ENCODE measurements at regions of chr3 and their contacts with region 1.

Region 1: DNA sequence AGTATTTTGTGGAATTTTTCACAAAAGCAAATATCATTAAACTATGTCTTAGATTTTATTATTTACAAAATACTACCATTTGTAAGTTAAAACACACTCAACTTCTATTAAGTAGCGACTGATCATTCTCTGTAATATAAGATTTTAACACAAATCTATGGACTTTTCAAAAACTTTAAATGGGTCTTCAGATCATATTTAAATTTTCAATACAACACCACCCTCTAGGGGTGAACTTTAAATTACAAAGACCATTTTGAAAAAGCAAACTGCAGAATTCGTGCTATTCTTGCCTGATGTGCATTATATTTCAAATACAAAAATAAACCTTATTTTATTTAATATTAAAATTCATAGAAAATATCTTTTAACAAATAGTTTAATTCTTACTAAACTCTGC is 8.2 kb upstream of the VGLL4 start:
- DNase-seq: peak; percentile 29
- ATAC-seq: no peak
- H3K4me3 ChIP-seq: no peak overlapping the region
- H3K27ac ChIP-seq: no peak overlapping the region
- H3K4me1 ChIP-seq: peaks cover 14% of the 10 kb centered on the region
- H3K27me3 ChIP-seq: no peaks in the 10 kb centered on the region
- CTCF ChIP-seq: peak; percentile 41; the same call in 1 of the 2 replicates
- EP300 ChIP-seq: no peak
- POLR2A ChIP-seq: no peak
- RAD21 ChIP-seq: no peak

Region 2: DNA sequence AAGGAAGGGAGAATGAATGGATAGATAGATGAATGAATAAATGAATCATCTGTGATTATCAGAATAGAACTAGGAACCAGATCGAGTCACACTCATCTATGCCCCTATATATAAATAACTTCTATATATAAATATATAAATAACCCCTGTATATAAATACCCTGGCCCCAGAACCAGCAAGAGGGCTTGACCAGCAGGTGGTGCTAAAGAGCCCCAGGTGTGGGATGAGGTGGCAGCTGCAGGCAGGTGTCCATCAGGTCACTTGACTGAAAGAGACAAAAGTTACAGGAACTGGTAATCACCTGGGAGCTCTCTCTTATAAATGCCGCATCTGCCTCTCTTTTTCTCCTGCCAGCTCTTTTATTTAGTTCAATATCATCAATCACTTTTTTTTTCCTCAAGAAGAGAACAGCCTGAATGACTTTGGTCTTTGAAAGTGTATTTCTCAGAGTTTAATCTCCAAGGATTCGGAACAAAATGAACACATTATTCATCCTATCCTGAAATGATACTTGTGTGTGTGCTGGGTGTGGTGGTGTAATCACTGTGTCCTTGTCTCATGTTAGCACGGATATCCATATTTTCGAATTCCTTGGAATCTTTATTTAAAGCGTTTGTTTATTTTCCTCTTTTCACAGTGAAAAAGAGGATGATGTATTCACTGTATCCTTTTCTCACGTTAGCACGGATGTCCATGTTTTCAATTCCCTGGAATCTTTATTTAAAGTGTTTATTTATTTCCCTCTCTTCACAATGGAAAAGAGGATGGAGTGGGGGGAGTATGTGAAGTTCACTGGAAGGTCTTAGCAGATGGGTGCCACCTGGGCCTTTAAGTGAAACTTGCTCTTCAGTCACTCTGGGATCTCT is 415.1 kb before region 1 on chr3:
- CTCF ChIA-PET with region 1: no interaction called
- POLR2A ChIA-PET with region 1: no interaction called
- in situ Hi-C with region 1: loop called (anchors 10 kb)
- intact Hi-C with region 1: loop called (anchors 5 kb)
- DNase-seq: peak; percentile 39
- ATAC-seq: peak; percentile 79
- H3K4me3 ChIP-seq: no peak overlapping the region
- H3K27ac ChIP-seq: no peak overlapping the region
- H3K4me1 ChIP-seq: no peaks in the 10 kb centered on the region
- H3K27me3 ChIP-seq: peaks cover 0 to 3% of the 10 kb centered on the region in 2 experiments; a peak in 2 of 5 replicates
- CTCF ChIP-seq: peak; percentile 63
- EP300 ChIP-seq: no peak
- POLR2A ChIP-seq: no peak
- RAD21 ChIP-seq: no peak

Region 3: DNA sequence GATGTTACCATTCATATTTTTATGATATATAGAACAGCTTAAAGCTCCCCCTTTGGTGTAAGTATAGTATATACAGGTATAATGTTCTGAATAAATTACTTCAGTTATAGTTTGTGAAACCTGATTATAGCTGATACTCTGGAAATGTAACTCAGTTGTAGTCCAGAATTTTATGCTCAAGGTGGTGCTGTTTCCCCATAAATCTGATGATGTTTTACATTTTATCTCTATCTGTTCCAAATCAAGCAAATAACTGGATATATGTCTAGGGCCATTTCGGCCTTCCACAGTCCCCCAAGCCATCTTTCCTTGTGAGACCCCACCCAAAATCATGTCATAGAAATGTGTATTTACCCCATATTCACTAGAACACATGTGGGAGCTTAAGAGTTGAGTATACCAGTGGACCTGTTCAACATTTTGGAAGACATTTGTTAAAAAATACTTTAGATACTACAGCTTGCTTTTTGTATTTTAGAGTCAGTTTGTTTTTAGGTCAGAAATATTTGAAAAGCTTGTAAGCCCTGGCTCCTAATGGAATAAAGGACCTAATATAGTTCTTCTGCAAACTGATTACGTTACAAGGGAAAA is 272.6 kb before region 1 on chr3:
- CTCF ChIA-PET with region 1: interaction called, 14 read pairs
- POLR2A ChIA-PET with region 1: no interaction called
- in situ Hi-C with region 1: loop called (anchors 5 kb)
- intact Hi-C with region 1: loop called (anchors 2 kb)
- DNase-seq: peak; percentile 24
- ATAC-seq: peak; percentile 59; the same call in 2 of the 3 replicates
- H3K4me3 ChIP-seq: no peak overlapping the region
- H3K27ac ChIP-seq: no peak overlapping the region
- H3K4me1 ChIP-seq: peaks cover 15% of the 10 kb centered on the region
- H3K27me3 ChIP-seq: no peaks in the 10 kb centered on the region
- CTCF ChIP-seq: peak; percentile 72
- EP300 ChIP-seq: no peak
- POLR2A ChIP-seq: no peak
- RAD21 ChIP-seq: peak; percentile 52; the same call in 1 of the 2 replicates

Region 4: GRCh38 chr3:11539677-11540076 is 112.2 kb before region 1 on chr3:
- CTCF ChIA-PET with region 1: no interaction called
- POLR2A ChIA-PET with region 1: no interaction called
- in situ Hi-C with region 1: no loop called
- intact Hi-C with region 1: loop called (anchors 1 kb)
- DNase-seq: no peak
- ATAC-seq: no peak
- H3K4me3 ChIP-seq: no peak overlapping the region
- H3K27ac ChIP-seq: no peak overlapping the region
- H3K4me1 ChIP-seq: peaks cover 25% of the 10 kb centered on the region
- H3K27me3 ChIP-seq: no peaks in the 10 kb centered on the region
- CTCF ChIP-seq: no peak
- EP300 ChIP-seq: no peak
- POLR2A ChIP-seq: no peak
- RAD21 ChIP-seq: no peak

Region 5: DNA sequence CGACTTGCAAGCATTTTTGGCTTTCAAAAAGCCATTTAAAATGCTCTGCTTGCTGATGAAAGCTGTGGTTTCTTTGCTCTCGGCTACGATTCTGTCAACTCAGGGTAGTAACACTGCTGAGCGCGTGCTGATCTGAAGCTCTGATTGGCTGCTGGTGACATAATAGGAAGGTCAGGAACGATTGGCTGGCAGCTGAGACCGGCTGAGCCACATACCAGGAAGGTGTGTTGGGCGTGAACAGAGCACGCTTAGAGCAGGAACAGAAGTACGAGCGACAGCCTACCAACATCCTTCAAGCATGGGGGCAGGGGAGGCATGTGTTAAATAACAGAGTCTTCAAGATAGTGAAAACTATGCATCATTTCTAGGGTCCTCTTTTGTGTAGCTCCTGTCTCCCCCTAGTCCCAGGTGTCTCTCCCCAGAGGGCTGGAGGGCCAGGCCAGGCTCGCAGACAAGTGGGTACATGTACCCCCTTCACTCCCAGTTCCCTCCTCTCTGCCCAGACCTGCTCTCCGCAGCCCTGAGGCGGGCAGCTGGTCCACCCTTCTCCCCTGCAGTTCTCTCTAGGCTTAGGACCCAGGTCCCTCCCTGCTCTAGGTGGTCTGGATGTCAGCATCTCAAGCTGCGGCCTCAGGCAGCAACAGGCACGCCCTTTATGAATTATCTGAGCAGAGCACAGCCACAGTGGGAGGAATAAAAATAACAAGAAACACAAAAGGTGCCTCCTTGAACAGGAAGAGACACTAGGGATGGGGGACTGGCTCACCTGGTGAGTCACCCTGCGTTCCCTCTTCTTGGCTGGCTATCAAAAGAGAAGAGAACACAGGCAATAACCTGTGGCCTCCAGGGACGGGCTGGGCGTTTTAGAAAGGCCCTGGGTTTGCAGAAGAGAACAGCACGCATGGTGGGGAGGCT is 118.8 kb after region 1 on chr3:
- CTCF ChIA-PET with region 1: no interaction called
- POLR2A ChIA-PET with region 1: no interaction called
- in situ Hi-C with region 1: no loop called
- intact Hi-C with region 1: no loop called
- DNase-seq: peak; percentile 83
- ATAC-seq: peak; percentile 95
- H3K4me3 ChIP-seq: peak overlapping the region in 2 of 3 experiments; percentile 24 to 64; a peak in 4 of 6 replicates
- H3K27ac ChIP-seq: no peak overlapping the region
- H3K4me1 ChIP-seq: peaks cover 31% of the 10 kb centered on the region
- H3K27me3 ChIP-seq: no peaks in the 10 kb centered on the region
- CTCF ChIP-seq: no peak
- EP300 ChIP-seq: no peak
- POLR2A ChIP-seq: 0 out of 4 replicates have a peak, but pooled peaks of 1 of the 2 experiments have one; percentile 44
- RAD21 ChIP-seq: no peak

Region 6: GRCh38 chr3:11803977-11804892 is 152.3 kb after region 1 on chr3:
- CTCF ChIA-PET with region 1: interaction called, 7 read pairs
- POLR2A ChIA-PET with region 1: no interaction called
- in situ Hi-C with region 1: loop called (anchors 5 kb)
- intact Hi-C with region 1: loop called (anchors 1 kb)
- DNase-seq: peak; percentile 51
- ATAC-seq: peak; percentile 86
- H3K4me3 ChIP-seq: no peak overlapping the region
- H3K27ac ChIP-seq: no peak overlapping the region
- H3K4me1 ChIP-seq: no peaks in the 10 kb centered on the region
- H3K27me3 ChIP-seq: no peaks in the 10 kb centered on the region
- CTCF ChIP-seq: peak; percentile 78
- EP300 ChIP-seq: no peak
- POLR2A ChIP-seq: no peak
- RAD21 ChIP-seq: peak; percentile 48; the same call in 1 of the 2 replicates

Region 7: GRCh38 chr3:11846281-11847034 is 194.6 kb after region 1 on chr3 and contains the start of gene TAMM41:
- CTCF ChIA-PET with region 1: no interaction called
- POLR2A ChIA-PET with region 1: no interaction called
- in situ Hi-C with region 1: no loop called
- intact Hi-C with region 1: loop called (anchors 5 kb)
- DNase-seq: peak; percentile 78
- ATAC-seq: peak; percentile 99
- H3K4me3 ChIP-seq: peak within 1 kb of the TSS; percentile 75 to 89 (median 81)
- H3K27ac ChIP-seq: peak within 1 kb of the TSS; percentile 38
- H3K4me1 ChIP-seq: peaks cover 27% of the 10 kb centered on the region
- H3K27me3 ChIP-seq: peaks cover 0 to 8% of the 10 kb centered on the region in 2 experiments; a peak in 1 of 5 replicates
- CTCF ChIP-seq: peak; percentile 99
- EP300 ChIP-seq: no peak
- POLR2A ChIP-seq: peak; percentile 70 to 97
- RAD21 ChIP-seq: peak; percentile 38
- total RNA-seq, gene TAMM41: 12.2 and 12.4 TPM in 2 replicates